ENCODE measurements at regions of chr22 and their contacts with region 1.

Region 1: DNA sequence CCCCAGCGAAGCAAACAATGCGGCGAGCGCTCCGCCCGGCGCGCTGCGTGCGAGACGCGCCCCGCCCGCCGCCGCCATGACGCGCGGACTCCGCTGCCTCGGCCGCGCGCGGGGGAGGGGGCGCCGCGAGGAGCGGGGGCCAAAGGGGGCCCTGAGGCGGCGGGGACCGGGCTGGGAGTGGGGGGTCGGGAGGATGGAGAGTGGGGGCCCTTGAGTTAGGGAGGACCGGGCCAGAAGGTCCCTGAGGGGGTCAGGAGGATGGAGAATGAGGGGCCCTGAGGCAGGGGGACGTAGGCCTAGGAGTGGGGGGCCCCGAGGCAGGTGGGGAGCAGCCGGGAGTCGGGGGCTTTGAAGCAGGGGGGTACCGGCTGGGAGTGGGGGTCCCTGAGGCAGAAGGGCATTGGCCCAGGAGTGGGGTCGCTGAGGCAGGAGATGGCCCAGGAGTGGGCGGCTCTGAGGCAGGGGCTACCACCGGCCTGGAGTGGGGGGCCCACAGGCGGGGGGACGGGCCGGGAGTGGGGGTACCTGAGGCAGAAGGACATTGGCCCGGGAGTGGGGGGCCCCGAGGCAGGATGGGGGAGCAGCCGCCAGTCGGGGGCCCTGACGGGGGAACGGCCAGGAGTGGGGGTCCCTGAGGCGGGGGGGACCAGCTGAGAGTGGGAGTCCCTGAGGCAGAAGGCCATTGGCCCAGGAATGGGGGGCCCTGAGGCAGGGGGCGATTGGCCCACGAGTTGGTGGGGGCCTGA is at the start of gene BRD1:
- DNase-seq: peak; percentile 73
- ATAC-seq: peak; percentile 68
- H3K4me3 Mint-ChIP-seq: peak within 1 kb of the TSS; percentile 88
- H3K27ac Mint-ChIP-seq: peak within 1 kb of the TSS; percentile 92
- H3K4me1 Mint-ChIP-seq: peaks cover 40% of the 10 kb centered on the region
- H3K27me3 Mint-ChIP-seq: no peaks in the 10 kb centered on the region
- total RNA-seq, gene BRD1: 22.1 to 23.6 TPM

Region 2: DNA sequence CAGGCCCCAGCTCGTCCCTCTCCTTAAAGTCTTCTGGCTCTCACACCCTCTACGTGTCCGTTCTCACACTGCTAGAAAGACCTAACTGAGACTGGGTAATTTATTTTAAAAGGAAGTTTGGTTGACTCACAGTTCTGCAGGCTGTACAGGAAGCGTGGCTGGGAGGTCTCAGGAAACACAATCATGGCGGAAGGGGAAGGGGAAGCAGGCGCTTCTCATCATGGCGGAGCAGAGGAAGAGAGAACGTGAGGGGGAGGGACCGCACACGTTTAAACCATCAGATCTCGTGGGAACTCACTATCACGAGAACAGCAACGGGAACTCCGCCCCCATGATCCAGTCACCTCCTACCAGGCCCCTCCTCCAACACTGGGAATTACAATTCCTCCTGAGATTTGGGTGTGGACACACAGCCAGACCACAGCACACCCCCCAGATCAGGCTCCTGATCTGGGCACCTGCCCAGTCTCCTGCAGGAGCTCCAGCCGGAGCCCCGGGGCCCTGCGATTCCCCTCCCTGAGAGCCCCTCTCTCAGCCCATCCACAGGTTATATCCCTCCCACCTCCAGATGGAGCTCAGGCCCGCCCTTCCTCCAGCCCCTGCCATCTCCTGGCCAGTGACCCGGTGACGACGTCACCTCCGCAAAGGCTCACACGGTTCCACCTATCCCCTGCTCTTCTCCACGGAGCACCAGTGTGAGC is 170.6 kb before region 1 on chr22:
- CTCF ChIA-PET with region 1: no interaction called
- POLR2A ChIA-PET with region 1: no interaction called
- intact Hi-C with region 1: loop called in 1 of 2 experiments (anchors 1 kb)
- DNase-seq: peak; percentile 89
- ATAC-seq: peak; percentile 90
- H3K4me3 Mint-ChIP-seq: peak overlapping the region; percentile 92
- H3K27ac Mint-ChIP-seq: peak overlapping the region; percentile 81
- H3K4me1 Mint-ChIP-seq: peaks cover 39% of the 10 kb centered on the region
- H3K27me3 Mint-ChIP-seq: no peaks in the 10 kb centered on the region

Region 3: GRCh38 chr22:49815641-49816071 is 12.4 kb before region 1 on chr22:
- CTCF ChIA-PET with region 1: no interaction called
- POLR2A ChIA-PET with region 1: no interaction called
- intact Hi-C with region 1: no loop called
- DNase-seq: peak; percentile 53
- ATAC-seq: peak; percentile 86
- H3K4me3 Mint-ChIP-seq: no peak overlapping the region
- H3K27ac Mint-ChIP-seq: no peak overlapping the region
- H3K4me1 Mint-ChIP-seq: peaks cover 68% of the 10 kb centered on the region
- H3K27me3 Mint-ChIP-seq: no peaks in the 10 kb centered on the region

Region 4: GRCh38 chr22:49838771-49839717 is 11.0 kb after region 1 on chr22:
- CTCF ChIA-PET with region 1: interaction called, 3 read pairs
- POLR2A ChIA-PET with region 1: no interaction called
- intact Hi-C with region 1: loop called in 1 of 2 experiments (anchors 1 kb)
- DNase-seq: peak; percentile 92
- ATAC-seq: peak; percentile 87
- H3K4me3 Mint-ChIP-seq: peak overlapping the region; percentile 73
- H3K27ac Mint-ChIP-seq: peak overlapping the region; percentile 98
- H3K4me1 Mint-ChIP-seq: peaks cover 35% of the 10 kb centered on the region
- H3K27me3 Mint-ChIP-seq: no peaks in the 10 kb centered on the region

Region 5: DNA sequence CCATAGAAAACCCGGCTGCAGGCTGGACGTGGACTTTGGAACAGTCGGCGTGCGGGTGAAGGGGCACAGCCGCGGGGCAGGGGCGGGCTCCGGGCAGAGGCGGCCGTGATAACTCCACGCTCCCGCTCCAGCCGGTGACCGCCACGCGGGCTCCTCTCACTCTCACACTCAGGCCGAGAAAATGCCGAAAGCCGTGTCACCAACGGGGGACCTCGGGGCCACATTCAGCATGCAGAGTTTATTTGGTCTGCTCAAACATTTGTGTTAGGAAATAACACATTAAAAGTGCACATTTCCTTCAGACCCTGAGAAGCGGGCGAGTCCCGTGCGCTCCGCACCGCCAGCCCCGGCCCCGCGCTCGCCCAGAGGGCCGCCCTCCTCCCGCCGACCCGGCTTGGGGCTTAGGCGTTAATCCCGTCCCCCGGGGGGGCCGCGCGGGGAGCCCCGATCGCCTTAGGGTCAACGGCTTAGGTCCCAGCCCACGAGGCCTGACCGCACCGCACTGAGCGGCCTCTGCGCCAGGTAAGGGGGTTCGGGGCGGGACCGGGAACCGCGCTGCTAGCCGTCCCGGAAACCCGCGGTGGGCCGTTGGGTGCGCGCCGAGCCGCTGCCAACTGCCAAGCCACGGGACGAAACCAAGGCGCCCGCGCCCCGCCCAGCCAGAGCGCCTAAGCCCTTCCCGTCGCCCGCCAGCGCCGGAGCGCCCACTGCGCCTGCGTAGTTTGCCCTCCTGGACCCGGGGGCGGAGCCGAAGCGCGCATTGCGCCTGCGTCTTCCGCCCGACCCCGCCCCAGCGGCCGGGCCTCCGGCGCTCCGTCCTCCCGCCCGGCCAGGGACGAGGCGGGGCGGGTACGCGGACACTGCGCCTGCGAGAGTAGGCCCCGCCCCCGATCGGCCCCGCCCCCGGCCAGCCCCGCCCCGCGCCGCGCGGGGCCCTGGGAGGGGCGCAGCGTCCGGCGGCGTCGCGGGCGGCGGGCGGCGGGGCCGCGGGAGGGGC is 25.2 kb after region 1 on chr22 and contains the start of gene ZBED4:
- CTCF ChIA-PET with region 1: no interaction called
- POLR2A ChIA-PET with region 1: interaction called, 3 read pairs
- intact Hi-C with region 1: loop called (anchors 1 to 2 kb)
- DNase-seq: peak; percentile 99
- ATAC-seq: peak; percentile 88
- H3K4me3 Mint-ChIP-seq: peak within 1 kb of the TSS; percentile 96
- H3K27ac Mint-ChIP-seq: peak within 1 kb of the TSS; percentile 87
- H3K4me1 Mint-ChIP-seq: peaks cover 36% of the 10 kb centered on the region
- H3K27me3 Mint-ChIP-seq: peaks cover 8% of the 10 kb centered on the region
- total RNA-seq, gene ZBED4: 17.3 to 17.4 TPM

Region 6: GRCh38 chr22:49867303-49868265 is 39.6 kb after region 1 on chr22:
- CTCF ChIA-PET with region 1: no interaction called
- POLR2A ChIA-PET with region 1: no interaction called
- intact Hi-C with region 1: loop called (anchors 5 kb)
- DNase-seq: no peak
- ATAC-seq: peak; percentile 37
- H3K4me3 Mint-ChIP-seq: no peak overlapping the region
- H3K27ac Mint-ChIP-seq: peak overlapping the region; percentile 60
- H3K4me1 Mint-ChIP-seq: peaks cover 54% of the 10 kb centered on the region
- H3K27me3 Mint-ChIP-seq: no peaks in the 10 kb centered on the region

Region 7: DNA sequence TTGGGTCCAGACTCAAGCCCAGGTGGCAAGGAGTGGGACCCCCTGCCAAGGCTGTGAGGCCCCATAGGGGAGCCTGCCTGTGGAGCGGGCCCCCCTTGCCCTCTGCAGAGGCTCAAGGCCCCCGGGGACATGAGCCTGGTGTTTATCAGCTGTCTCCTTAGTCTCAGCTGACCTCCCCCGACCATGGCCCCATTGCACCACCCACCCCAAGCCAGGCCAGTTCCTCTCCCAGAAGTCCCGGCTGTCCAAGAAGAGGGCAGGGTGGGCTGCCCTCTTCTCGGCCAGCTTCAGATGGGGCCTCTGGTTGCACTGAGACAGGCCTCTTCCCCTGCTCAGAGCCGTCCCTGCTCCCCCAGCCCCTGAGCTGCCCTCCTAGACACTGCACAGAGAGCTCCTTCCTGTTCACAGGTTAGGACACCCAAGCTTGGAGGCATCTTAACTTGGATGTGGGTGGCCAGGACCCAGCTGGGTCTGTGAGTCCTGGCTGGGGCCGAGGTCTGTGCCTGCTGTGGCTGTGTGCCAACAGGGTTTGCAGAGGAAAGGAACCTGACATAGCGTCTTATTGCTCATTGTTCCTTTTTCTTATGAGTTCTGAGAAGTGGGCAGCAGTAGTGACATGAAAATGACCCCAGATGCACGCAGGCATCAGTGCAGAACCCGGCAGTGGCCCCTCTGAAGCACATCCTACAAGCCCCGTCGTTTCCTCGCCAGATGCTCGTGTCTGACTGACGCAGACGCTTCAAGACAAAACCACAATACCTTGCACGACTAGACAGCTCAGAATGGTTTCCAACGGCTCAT is 363.1 kb after region 1 on chr22:
- CTCF ChIA-PET with region 1: no interaction called
- POLR2A ChIA-PET with region 1: no interaction called
- intact Hi-C with region 1: loop called in 1 of 2 experiments (anchors 1 kb)
- DNase-seq: peak; percentile 86
- ATAC-seq: peak; percentile 73
- H3K4me3 Mint-ChIP-seq: peak overlapping the region; percentile 83
- H3K27ac Mint-ChIP-seq: peak overlapping the region; percentile 94
- H3K4me1 Mint-ChIP-seq: peaks cover 43% of the 10 kb centered on the region
- H3K27me3 Mint-ChIP-seq: no peaks in the 10 kb centered on the region

Measured in activated CD4-positive, alpha-beta T cell treated with anti-CD3 and anti-CD28 coated beads for 36 hours (primary cell).